ENCODE measurements at regions of chr6 and their contacts with region 1.

Region 1: GRCh38 chr6:169654598-169655391 is 47.0 kb downstream of the WDR27 start:
- DNase-seq: peak; percentile 73 to 81 (median 78)
- H3K4me3 ChIP-seq: peak overlapping the region in 1 of 2 donors; percentile 81
- H3K4me3 Mint-ChIP-seq: peak overlapping the region; percentile 85 to 93 (median 92)
- H3K27ac ChIP-seq: peak overlapping the region; percentile 47
- H3K27ac Mint-ChIP-seq: peak overlapping the region; percentile 78 to 96 (median 83)
- H3K4me1 ChIP-seq: peaks cover 4% of the 10 kb centered on the region
- H3K4me1 Mint-ChIP-seq: peaks cover 0 to 17% (median 10%) of the 10 kb centered on the region in 4 donors
- H3K27me3 ChIP-seq: no peaks in the 10 kb centered on the region
- H3K27me3 Mint-ChIP-seq: no peaks in the 10 kb centered on the region

Region 2: DNA sequence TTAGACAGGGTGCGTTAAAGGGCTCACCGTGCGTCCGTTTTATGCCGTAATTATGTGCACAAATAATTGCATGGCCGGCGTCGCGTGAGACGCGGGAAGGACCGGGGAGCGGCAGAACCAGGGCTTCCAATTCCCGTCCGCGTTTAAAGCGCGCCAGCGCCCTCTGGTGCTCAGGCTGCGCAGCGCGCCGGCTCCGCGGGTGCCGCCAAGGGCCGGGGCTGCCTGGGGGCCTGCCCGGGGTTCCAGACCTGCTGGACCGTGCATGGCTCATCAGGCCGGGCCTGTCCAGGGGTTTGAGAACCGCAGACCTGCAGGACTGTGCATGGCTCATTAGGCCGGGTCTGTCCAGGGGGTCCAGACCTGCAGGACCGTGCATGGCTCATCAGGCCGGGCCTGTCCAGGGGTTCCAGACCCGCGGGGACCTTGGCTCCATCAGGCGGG is 770.1 kb before region 1 on chr6:
- CTCF ChIA-PET with region 1: no interaction called
- POLR2A ChIA-PET with region 1: no interaction called
- intact Hi-C with region 1: loop called (anchors 5 kb)
- DNase-seq: peak; percentile 64 to 84 (median 81)
- H3K4me3 ChIP-seq: peak overlapping the region; percentile 79 to 85
- H3K4me3 Mint-ChIP-seq: peak overlapping the region; percentile 77 to 93 (median 92)
- H3K27ac ChIP-seq: peak overlapping the region; percentile 35
- H3K27ac Mint-ChIP-seq: peak overlapping the region; percentile 59 to 96 (median 93)
- H3K4me1 ChIP-seq: peaks cover 11% of the 10 kb centered on the region
- H3K4me1 Mint-ChIP-seq: peaks cover 5 to 15% (median 10%) of the 10 kb centered on the region in 4 donors
- H3K27me3 ChIP-seq: no peaks in the 10 kb centered on the region
- H3K27me3 Mint-ChIP-seq: no peaks in the 10 kb centered on the region

Region 3: GRCh38 chr6:168895102-168895812 is 759.5 kb before region 1 on chr6:
- CTCF ChIA-PET with region 1: no interaction called
- POLR2A ChIA-PET with region 1: no interaction called
- intact Hi-C with region 1: loop called (anchors 2 kb)
- DNase-seq: peak; percentile 71 to 78 (median 74)
- H3K4me3 ChIP-seq: no peak overlapping the region
- H3K4me3 Mint-ChIP-seq: peak overlapping the region; percentile 40 to 87 (median 60)
- H3K27ac ChIP-seq: no peak overlapping the region
- H3K27ac Mint-ChIP-seq: peak overlapping the region in 5 of 7 donors; percentile 8 to 77 (median 53)
- H3K4me1 ChIP-seq: peaks cover 8% of the 10 kb centered on the region
- H3K4me1 Mint-ChIP-seq: peaks cover 9 to 28% (median 11%) of the 10 kb centered on the region in 4 donors
- H3K27me3 ChIP-seq: no peaks in the 10 kb centered on the region
- H3K27me3 Mint-ChIP-seq: peaks cover 3% of the 10 kb centered on the region in 2 donors

Region 4: DNA sequence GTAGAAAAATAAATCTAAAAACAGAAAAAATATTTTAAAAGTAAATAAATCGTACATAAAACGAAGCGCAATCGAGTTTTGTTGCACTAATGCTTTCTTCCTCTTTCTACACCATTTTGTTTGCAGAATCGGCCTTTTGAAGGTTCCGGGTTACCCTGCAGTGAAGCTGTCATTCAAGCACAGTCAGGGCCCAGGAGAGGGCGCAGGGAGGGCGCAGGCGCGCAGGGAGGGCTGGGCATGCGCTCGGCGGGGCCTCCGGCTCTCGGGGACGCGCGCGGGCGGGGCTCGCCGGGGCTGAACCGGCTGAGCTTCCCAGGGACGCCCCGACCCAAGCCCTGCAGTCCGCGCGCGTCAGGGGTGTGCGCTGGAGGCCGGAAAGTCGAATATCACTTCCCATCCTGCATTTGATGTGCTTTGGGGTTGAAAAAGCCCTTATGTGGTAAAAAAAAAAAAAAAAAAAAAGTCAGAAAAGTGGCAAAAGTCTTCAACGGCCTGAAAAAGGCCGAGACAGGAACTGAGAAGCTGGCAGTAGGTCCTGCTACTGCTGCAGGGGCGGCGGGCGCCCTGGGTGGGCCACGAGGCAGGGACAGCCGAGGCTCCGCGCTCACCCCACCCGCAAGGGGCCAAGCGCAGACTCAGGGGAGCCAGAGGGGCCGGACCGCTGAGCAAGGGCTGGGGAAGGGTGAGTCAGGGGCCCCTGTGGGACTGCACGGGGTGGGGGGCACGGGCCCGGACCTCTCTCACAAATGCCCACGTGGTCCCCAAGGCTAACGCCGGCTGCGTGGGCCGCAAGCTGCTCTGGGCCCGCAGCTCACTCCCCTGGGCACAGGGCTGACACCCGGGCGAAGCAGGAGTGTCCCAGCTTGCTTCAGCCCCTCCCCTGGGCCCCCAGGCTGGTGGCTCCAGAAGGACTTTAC is 441.6 kb before region 1 on chr6:
- CTCF ChIA-PET with region 1: no interaction called
- POLR2A ChIA-PET with region 1: no interaction called
- intact Hi-C with region 1: loop called (anchors 2 kb)
- DNase-seq: peak; percentile 82 to 94 (median 93)
- H3K4me3 ChIP-seq: peak overlapping the region in 1 of 2 donors; percentile 36
- H3K4me3 Mint-ChIP-seq: peak overlapping the region; percentile 44 to 84 (median 70)
- H3K27ac ChIP-seq: peak overlapping the region; percentile 32
- H3K27ac Mint-ChIP-seq: peak overlapping the region in 6 of 7 donors; percentile 65 to 95 (median 86)
- H3K4me1 ChIP-seq: peaks cover 10% of the 10 kb centered on the region
- H3K4me1 Mint-ChIP-seq: peaks cover 6 to 12% (median 8%) of the 10 kb centered on the region in 4 donors
- H3K27me3 ChIP-seq: no peaks in the 10 kb centered on the region
- H3K27me3 Mint-ChIP-seq: no peaks in the 10 kb centered on the region

Region 5: GRCh38 chr6:169457762-169458161 is 197.0 kb before region 1 on chr6:
- CTCF ChIA-PET with region 1: no interaction called
- POLR2A ChIA-PET with region 1: no interaction called
- intact Hi-C with region 1: no loop called
- DNase-seq: no peak
- H3K4me3 ChIP-seq: no peak overlapping the region
- H3K4me3 Mint-ChIP-seq: no peak overlapping the region
- H3K27ac ChIP-seq: no peak overlapping the region
- H3K27ac Mint-ChIP-seq: no peak overlapping the region
- H3K4me1 ChIP-seq: no peaks in the 10 kb centered on the region
- H3K4me1 Mint-ChIP-seq: no peaks in the 10 kb centered on the region
- H3K27me3 ChIP-seq: no peaks in the 10 kb centered on the region
- H3K27me3 Mint-ChIP-seq: no peaks in the 10 kb centered on the region

Region 6: DNA sequence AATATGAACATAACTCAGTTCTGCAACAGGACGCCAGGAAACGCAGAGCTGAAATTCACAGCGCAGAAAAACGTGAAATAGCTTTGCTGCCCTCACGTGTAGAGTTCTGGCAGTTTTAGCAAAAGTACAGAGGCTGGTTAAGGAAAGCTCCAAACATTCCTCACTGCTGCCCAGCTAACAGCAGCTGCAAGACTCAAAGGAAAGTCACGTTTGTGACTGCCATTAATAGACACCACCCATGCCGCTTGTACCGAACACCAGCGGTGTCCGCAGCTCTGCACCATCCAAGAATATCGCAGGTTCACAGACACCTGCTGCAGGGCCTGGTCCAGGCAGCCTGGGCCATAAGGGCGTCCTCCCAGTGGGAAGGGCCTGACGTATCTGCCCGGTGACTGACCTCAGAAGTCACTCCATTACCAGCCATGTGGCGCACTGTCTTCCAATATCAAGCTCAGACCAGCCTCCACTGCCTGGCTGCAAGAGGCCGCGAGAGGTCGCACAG is 14.4 kb before region 1 on chr6:
- CTCF ChIA-PET with region 1: no interaction called
- POLR2A ChIA-PET with region 1: no interaction called
- intact Hi-C with region 1: no loop called
- DNase-seq: no peak
- H3K4me3 ChIP-seq: no peak overlapping the region
- H3K4me3 Mint-ChIP-seq: no peak overlapping the region
- H3K27ac ChIP-seq: no peak overlapping the region
- H3K27ac Mint-ChIP-seq: no peak overlapping the region
- H3K4me1 ChIP-seq: no peaks in the 10 kb centered on the region
- H3K4me1 Mint-ChIP-seq: no peaks in the 10 kb centered on the region
- H3K27me3 ChIP-seq: no peaks in the 10 kb centered on the region
- H3K27me3 Mint-ChIP-seq: no peaks in the 10 kb centered on the region

Region 7: DNA sequence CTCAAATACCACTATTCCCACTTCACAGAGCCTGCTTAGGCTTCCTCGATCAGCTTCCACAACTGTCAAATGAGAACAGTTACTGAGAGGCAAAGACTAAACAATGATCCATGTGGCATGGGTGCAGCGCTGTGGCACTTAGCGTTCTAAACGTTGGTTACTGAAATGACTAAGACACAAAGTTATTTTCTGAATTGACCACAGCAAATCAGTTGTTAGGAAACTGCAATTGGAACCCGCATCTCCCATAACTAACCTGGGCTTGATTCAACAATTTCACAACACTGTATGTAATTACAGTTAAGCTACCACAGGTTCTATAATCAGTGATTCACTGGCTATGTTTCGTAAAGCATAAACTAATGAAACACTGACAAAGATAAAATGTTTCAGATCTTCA is 34.5 kb after region 1 on chr6:
- CTCF ChIA-PET with region 1: no interaction called
- POLR2A ChIA-PET with region 1: no interaction called
- intact Hi-C with region 1: no loop called
- DNase-seq: no peak
- H3K4me3 ChIP-seq: no peak overlapping the region
- H3K4me3 Mint-ChIP-seq: no peak overlapping the region
- H3K27ac ChIP-seq: no peak overlapping the region
- H3K27ac Mint-ChIP-seq: no peak overlapping the region
- H3K4me1 ChIP-seq: no peaks in the 10 kb centered on the region
- H3K4me1 Mint-ChIP-seq: peaks cover 0 to 6% (median 2%) of the 10 kb centered on the region in 4 donors
- H3K27me3 ChIP-seq: no peaks in the 10 kb centered on the region
- H3K27me3 Mint-ChIP-seq: no peaks in the 10 kb centered on the region

Region 8: DNA sequence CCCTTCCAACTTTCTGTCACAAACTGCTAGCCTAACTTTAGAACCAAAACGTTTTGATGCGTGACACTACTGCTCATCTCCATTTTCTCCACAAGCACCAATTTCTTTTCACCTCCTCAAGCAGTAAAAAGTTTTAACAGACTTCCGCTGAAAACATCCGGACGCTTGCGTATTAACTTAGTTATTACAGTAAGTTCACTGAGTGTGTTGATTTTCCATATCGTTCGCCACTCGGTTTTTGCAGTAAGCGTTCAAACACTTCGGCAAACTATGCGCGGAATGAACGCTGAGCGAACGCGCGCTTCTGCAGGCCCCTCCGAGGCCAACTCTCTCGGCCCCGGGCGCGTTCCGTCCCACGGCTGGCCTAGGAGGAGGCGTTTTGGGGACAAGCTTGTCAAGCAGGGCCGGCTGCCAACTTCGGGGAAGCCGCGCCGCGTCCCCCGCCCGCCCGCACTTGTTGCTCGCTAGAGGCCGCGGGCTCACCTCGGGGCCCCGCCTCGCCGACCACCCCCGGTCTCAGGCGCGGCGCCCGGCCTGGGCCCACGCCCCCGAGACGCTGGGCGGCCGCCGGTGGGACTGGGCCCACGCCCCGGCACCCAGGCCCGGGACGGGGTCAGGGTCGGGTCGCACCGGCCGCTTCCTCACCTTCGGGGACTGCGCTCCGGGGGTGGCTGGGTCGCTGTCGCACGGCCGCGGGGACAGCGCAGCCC is 68.6 kb after region 1 on chr6:
- CTCF ChIA-PET with region 1: no interaction called
- POLR2A ChIA-PET with region 1: no interaction called
- intact Hi-C with region 1: loop called (anchors 2 kb)
- DNase-seq: peak; percentile 74 to 79 (median 76)
- H3K4me3 ChIP-seq: peak overlapping the region; percentile 76 to 90
- H3K4me3 Mint-ChIP-seq: peak overlapping the region; percentile 89 to 100 (median 96)
- H3K27ac ChIP-seq: peak overlapping the region; percentile 85
- H3K27ac Mint-ChIP-seq: peak overlapping the region; percentile 93 to 99 (median 96)
- H3K4me1 ChIP-seq: peaks cover 49% of the 10 kb centered on the region
- H3K4me1 Mint-ChIP-seq: peaks cover 28 to 55% (median 42%) of the 10 kb centered on the region in 4 donors
- H3K27me3 ChIP-seq: no peaks in the 10 kb centered on the region
- H3K27me3 Mint-ChIP-seq: no peaks in the 10 kb centered on the region

Region 9: DNA sequence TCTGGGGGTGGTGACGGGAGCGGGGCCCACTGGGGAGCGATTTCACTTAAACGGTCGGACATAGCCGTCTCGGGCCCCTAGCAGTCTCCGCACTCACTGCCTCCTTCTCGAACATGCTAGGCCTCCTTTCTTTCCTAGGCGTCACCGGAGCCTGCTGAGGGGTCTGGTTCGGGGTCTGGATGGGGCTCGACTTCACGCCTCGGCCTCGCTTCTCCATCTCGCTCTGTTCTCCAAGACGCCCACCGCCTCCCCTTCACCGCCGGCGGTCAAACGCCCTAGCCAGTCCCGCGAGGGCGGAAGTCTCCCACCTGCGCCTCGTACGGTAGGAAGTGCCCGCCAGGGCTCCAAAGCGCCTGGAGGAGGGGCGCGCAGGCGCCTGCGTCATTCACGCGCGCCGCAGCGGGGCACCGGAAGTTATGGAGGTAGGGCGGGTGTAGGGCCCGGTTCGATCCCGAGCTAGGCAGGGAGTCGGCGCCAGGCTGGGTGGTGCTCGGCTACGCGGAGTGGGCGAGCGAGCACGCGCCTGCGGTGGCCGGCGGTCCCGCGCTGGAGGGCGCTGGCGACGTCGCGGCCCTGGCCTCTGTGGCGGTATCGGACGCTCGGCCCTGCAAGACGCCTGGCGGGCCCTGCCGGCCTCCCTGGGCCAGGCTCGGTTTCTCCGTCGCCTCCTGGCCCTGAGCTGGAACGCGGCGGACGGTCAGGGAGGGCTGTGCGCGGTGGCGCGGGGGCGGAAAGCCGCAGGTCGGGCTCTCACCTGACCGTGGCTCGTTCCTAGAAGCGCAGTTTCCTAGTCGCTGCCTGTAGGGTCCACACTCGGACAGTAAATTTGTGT is 96.7 kb after region 1 on chr6 and contains the starts of genes DYNLT2 and ERMARD:
- CTCF ChIA-PET with region 1: no interaction called
- POLR2A ChIA-PET with region 1: interaction called, 3 read pairs
- intact Hi-C with region 1: loop called (anchors 2 kb)
- DNase-seq: peak; percentile 93 to 96 (median 94)
- H3K4me3 ChIP-seq: peak within 1 kb of the TSS; percentile 80 to 90
- H3K4me3 Mint-ChIP-seq: peak within 1 kb of the TSS; percentile 97 to 100 (median 99)
- H3K27ac ChIP-seq: peak within 1 kb of the TSS; percentile 93
- H3K27ac Mint-ChIP-seq: peak within 1 kb of the TSS; percentile 99 to 100 (median 100)
- H3K4me1 ChIP-seq: peaks cover 24% of the 10 kb centered on the region
- H3K4me1 Mint-ChIP-seq: peaks cover 18 to 39% (median 31%) of the 10 kb centered on the region in 4 donors
- H3K27me3 ChIP-seq: no peaks in the 10 kb centered on the region
- H3K27me3 Mint-ChIP-seq: peaks cover 0 to 1% of the 10 kb centered on the region in 2 donors
- total RNA-seq, gene DYNLT2: 4.6 to 6.9 TPM
- total RNA-seq, gene ERMARD: 33.4 to 41.4 TPM

Region 10: DNA sequence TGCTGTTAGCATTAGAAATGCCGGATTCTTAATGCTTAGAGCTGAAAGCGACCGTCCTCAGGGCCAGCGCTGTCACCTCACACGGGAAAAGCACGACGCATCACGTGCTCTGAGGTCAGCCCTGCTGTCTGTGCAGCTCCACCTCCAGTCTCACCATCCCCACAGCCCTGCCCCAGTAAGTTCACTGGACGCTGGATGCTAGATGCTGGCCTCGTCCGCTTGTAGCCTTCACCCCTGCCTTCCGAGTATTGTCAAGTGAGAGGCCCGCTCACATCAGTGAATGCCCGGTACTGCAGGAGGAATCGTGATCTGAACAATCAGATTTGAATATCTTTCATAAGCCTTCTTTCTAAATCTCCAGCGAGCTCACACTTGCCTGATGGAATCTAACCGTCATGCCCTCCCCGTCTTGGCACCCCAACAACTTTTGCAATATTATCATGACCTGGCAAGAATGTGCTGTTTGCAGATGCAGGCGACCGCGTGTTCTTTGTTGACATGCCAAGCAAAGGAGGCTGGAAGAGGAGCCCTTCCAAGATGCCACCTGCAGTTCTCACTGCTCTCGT is 571.1 kb after region 1 on chr6:
- CTCF ChIA-PET with region 1: no interaction called
- POLR2A ChIA-PET with region 1: no interaction called
- intact Hi-C with region 1: no loop called
- DNase-seq: no peak
- H3K4me3 ChIP-seq: no peak overlapping the region
- H3K4me3 Mint-ChIP-seq: no peak overlapping the region
- H3K27ac ChIP-seq: no peak overlapping the region
- H3K27ac Mint-ChIP-seq: no peak overlapping the region
- H3K4me1 ChIP-seq: peaks cover 10% of the 10 kb centered on the region
- H3K4me1 Mint-ChIP-seq: peaks cover 5 to 16% (median 13%) of the 10 kb centered on the region in 4 donors
- H3K27me3 ChIP-seq: no peaks in the 10 kb centered on the region
- H3K27me3 Mint-ChIP-seq: peaks cover 0 to 1% of the 10 kb centered on the region in 2 donors